Transverse colon (tissue), 4 donors: ENCODE measurements at regions of chr11 and their contacts with region 1.

Region 1: GRCh38 chr11:46504817-46505613 is 88.8 kb downstream of the AMBRA1 start:
- DNase-seq: no peak
- H3K4me3 ChIP-seq: no peak overlapping the region
- H3K27ac ChIP-seq: peak overlapping the region in 1 of 4 donors; percentile 23
- H3K4me1 ChIP-seq: peaks cover 0 to 17% (median 7%) of the 10 kb centered on the region in 4 donors
- H3K27me3 ChIP-seq: no peaks in the 10 kb centered on the region
- CTCF ChIP-seq: no peak
- EP300 ChIP-seq: no peak
- POLR2A ChIP-seq: no peak

Region 2: GRCh38 chr11:46463701-46464421 is 41.2 kb before region 1 on chr11:
- in situ Hi-C with region 1: no loop called
- intact Hi-C with region 1: loop called (anchors 2 kb)
- DNase-seq: no peak
- H3K4me3 ChIP-seq: no peak overlapping the region
- H3K27ac ChIP-seq: no peak overlapping the region
- H3K4me1 ChIP-seq: no peaks in the 10 kb centered on the region
- H3K27me3 ChIP-seq: no peaks in the 10 kb centered on the region
- CTCF ChIP-seq: no peak
- EP300 ChIP-seq: no peak
- POLR2A ChIP-seq: no peak

Region 3: GRCh38 chr11:47061429-47062178 is 556.6 kb after region 1 on chr11:
- in situ Hi-C with region 1: no loop called
- intact Hi-C with region 1: no loop called
- DNase-seq: no peak
- H3K4me3 ChIP-seq: no peak overlapping the region
- H3K27ac ChIP-seq: no peak overlapping the region
- H3K4me1 ChIP-seq: no peaks in the 10 kb centered on the region
- H3K27me3 ChIP-seq: no peaks in the 10 kb centered on the region
- CTCF ChIP-seq: no peak
- EP300 ChIP-seq: no peak
- POLR2A ChIP-seq: no peak